Motor neuron (in vitro differentiated cells): ENCODE measurements at regions of chr6 and their contacts with region 1.

Region 1: DNA sequence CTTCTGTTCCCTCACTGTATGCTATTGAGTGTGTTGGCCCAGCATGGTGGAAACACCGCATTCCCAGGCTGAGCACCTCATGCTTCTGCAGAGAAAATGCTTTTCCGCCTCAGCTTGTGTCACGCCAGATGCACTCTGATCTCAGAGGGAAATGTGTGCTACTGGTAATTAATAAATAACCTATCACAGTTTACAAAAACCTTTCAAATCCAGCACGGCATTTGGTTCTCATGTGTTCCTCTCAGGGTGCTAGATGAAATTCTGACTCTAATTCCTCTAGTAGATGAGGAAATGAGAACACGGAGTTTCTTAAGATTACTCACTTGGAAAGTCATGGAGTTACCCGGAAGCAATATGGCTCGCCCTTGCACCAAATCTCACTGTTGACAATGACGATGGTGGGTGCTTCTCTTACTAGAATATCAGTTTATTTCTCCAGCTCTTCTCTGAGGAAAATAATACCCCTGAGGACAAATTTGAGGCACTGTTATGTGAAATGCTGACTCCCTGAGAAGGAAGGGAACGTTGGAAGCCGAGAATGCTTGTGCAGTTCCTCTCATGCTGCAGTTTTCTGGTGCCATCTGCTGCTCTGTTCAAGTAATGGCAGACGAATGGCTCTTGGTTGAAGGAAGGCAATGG is 116.6 kb downstream of the RNF144B start:
- ATAC-seq: peak; percentile 69 to 88 (median 72)
- H3K4me3 ChIP-seq: no peak overlapping the region
- H3K27ac ChIP-seq: no peak overlapping the region
- H3K4me1 ChIP-seq: peaks cover 2 to 3% of the 10 kb centered on the region in 2 donors

Region 2: DNA sequence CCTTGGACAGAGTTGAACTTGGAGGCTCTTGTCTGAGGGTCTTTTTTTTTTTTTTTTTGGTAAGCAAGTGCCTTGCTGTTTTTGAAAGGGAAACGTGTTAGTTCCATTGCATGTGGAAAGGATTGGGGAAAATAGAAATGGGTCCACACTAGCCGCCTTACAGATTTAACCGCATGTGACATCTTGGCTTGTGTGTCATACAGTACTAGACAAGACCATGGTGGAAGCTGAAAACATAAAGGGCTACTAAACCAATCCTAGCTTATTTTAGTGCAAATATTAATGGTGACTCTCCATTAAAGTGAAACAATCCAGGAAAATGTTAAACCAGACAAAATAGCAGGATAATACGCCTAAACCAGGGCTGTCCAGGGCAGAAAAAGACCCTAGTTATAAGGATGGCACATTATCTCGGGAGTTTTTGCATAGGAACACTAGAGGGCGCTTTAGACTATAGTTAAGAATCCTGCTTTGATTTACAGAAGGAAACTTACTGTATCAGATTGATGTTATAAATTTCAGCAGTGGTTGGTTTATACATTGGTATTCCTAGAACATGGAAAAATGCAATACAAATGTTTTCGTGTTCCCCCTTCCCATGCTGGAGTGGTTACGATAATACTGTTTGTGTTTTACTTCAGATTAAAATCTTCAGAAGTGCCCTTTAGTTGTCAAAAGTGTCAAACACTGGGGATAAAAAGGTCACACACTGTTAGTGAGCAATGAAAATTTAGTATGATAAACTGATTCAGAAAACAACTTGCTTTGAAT is 179.6 kb before region 1 on chr6:
- in situ Hi-C with region 1: loop called in 6 of 9 experiments (anchors 10 to 25 kb)
- ATAC-seq: peak; percentile 36 to 85 (median 64)
- H3K4me3 ChIP-seq: no peak overlapping the region
- H3K27ac ChIP-seq: no peak overlapping the region
- H3K4me1 ChIP-seq: no peaks in the 10 kb centered on the region

Region 3: DNA sequence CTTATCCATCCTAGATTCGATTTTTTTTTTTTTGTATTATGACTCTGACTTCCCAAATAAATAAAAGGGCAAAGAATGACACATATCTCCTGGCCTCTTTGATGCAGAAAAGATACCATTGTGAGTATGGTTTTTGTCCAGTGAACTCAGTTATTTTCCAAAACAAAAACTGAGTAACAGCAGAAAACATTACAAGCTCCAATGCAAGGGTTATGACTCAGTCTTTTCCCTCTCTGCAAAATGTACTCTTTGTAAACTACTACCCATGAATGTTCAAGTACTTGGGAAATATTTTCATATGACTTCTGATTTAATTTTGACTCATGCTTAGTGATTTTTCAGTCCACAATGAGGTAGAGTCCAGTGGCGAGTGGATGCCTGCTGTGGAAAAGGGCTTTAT is 238.7 kb after region 1 on chr6:
- in situ Hi-C with region 1: no loop called
- ATAC-seq: no peak
- H3K4me3 ChIP-seq: no peak overlapping the region
- H3K27ac ChIP-seq: no peak overlapping the region
- H3K4me1 ChIP-seq: no peaks in the 10 kb centered on the region